ENCODE measurements at regions of chr18 and their contacts with region 1.

Region 1: GRCh38 chr18:21264651-21265050 is 22.6 kb downstream of the GREB1L start:
- DNase-seq: no peak

Region 2: DNA sequence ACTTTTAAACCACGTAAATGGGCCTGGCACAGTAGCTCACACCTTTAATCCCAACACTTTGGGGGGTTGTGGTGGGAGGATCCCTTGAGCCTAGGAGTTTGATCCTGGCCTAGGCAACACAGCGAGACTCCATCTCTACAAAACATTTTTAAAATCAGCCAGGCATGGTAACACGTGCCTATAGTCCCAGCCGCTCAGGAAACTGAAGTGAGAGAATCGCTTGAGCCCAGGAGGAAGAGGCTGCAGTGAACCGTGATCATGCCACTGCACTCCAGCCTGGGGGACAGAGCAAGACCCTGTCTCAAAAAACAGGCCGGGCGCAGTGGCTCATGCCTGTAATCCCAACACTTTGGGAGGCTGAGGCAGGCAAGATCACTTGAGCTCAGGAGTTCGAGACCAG is 165.2 kb before region 1 on chr18:
- intact Hi-C with region 1: no loop called
- DNase-seq: peak in 1 of 10 donors; percentile 62

Region 3: DNA sequence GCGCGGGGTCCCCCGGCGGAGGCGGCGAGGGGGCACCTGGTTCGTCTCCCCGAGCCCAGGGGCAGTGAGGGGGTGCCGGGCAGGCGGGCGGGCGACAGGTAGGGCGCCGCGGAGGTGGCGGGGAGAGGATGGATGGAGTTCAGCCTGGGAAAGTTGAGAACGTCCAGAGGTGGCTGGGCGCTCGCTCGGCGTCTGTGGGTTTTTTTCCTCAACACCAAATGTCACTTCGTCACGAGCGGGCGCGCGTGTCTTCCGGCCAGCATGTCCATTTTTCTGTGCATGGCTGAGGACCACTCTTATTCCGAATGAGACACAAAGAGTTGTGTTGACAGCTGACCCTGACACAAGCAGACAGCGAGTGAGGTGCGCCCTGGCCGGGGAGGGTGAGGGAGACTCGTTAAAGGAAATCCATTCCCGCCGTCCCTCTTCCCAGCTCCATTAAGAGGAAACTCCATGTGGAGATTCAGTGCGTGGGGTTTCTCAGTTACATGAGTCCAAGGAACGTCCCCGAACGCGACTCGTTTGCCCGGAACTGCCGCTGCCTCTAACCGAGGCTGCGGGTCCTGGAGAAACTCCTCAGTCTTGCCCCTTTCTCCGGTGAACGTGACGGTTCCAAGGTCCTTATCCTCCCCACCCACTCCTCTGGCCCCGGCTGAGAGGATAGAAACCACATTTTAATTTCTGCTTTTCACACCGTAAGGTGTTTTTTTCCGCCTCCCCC is 21.7 kb before region 1 on chr18:
- intact Hi-C with region 1: loop called (anchors 1 kb)
- DNase-seq: peak in 9 of 10 donors; percentile 8 to 83 (median 24)

Region 4: GRCh38 chr18:21327101-21327500 is 62.5 kb after region 1 on chr18:
- intact Hi-C with region 1: loop called (anchors 10 kb)
- DNase-seq: no peak

Region 5: GRCh38 chr18:21361307-21361880 is 96.7 kb after region 1 on chr18:
- intact Hi-C with region 1: loop called (anchors 10 kb)
- DNase-seq: no peak

Region 6: DNA sequence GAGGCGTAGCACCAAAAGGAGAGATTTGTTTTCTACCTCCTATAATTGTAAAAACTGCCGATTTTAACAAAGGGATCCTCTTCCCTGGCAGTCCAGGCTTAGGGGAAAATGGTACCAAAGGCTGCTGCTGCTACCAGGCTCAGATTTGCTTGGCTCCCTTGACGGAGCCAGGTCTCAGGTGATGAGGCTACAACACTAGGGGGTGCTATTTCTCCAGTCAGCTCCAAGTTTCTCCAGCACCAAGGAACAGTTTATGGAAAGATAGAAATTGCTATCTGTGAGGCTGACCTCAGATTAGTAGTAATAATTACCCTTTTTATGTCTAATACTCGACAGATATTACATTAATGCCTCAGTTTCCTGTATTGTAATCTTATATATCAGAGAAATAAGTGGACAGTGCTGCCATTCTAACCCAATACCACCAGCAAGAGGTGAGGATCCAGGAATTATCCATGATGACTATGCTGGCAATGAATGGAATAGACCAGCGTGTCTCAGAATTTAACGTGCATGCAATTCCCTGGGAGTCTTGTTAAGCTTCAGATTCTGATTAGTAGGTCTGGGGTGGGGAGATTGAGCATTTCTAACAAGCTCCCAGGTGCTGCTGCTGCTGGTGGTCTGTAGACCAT is 224.6 kb after region 1 on chr18:
- intact Hi-C with region 1: no loop called
- DNase-seq: peak in 3 of 10 donors; percentile 16 to 44 (median 18)

Measured in posterior cingulate gyrus (tissue), 11 donors.